ENCODE measurements at regions of chrX and their contacts with region 1.

Region 1: DNA sequence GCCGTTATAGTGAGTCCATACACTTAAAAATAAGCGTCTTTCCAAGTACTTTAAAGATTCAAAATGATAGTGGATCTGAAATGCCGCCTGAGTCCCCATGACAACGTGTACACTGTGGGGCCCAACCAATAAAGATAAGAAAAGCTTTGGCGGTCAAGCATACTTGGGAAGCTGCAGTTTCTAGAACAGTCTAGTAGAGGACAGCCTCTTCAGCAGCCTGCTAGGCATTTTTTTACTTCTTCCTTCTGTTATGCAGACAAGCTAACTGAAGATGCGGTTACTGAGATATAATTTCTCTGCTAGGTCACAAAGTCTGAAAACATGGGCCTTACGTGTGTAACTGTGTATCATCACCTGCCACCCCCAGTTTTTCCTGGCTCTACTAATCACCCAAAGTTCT is 402 bp upstream of the UPRT start:
- DNase-seq: no peak

Region 2: DNA sequence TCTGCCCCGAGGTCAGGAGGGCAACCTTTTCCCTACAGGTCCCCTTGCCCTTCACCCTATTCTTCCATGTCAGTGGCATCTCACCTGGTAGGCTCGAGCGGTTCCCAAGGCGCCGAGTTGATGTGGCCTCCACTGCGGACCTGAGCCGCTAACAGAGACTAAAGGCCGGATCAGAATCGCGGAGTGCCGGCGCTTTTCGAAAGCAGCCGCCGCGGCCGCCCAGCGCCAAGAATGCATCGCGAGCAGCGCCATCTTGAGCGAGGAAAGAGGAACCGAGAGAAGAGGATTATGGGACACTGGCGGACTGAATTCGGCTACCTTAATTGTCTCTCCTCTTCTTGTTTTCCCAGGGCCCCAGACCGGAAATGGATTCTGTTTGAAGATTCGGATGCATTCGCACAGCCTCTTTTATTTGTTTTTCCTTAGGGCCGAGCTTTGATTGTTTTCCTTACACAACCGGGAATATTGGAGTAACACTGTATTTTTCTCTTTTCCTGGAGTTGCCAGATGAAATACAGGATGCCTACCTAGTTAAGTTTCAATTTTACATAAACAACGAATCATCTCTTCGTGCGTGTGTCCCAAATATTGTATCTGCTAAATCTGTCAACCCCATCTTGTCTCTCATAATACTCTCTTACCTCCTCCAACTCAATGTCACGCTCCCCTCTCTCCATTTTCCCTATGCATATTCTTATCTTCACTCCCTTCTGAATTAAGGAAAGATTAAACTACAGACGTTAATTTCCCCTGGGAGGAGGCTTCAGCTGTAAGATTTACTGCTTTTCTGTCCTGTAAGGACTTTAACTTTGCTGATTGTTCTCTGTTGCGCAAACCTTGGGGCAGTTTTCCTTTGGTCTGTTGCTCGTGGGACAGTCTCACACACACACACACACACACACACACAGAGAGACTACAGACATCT is 117.2 kb before region 1 on chrX and contains the start of gene ABCB7:
- intact Hi-C with region 1: loop called (anchors 5 kb)
- DNase-seq: peak; percentile 85
- total RNA-seq, gene ABCB7: 26.3 TPM

Region 3: GRCh38 chrX:75327607-75328006 is 54.1 kb after region 1 on chrX:
- intact Hi-C with region 1: no loop called
- DNase-seq: no peak

Region 4: GRCh38 chrX:75638332-75638731 is 364.8 kb after region 1 on chrX:
- intact Hi-C with region 1: no loop called
- DNase-seq: no peak